CD4-positive, alpha-beta memory T cell (primary cell): ENCODE measurements at regions of chr13 and their contacts with region 1.

Region 1: GRCh38 chr13:32031025-32031814 is at the start of gene FRY:
- DNase-seq: peak; percentile 36 to 67 (median 50)
- H3K4me3 ChIP-seq: peak within 1 kb of the TSS; percentile 31 to 57
- H3K4me3 Mint-ChIP-seq: peak within 1 kb of the TSS; percentile 88 to 94 (median 90)
- H3K27ac ChIP-seq: peak within 1 kb of the TSS; percentile 57
- H3K27ac Mint-ChIP-seq: peak within 1 kb of the TSS; percentile 27 to 89 (median 85)
- H3K4me1 ChIP-seq: peaks cover 27% of the 10 kb centered on the region
- H3K4me1 Mint-ChIP-seq: peaks cover 10 to 47% (median 36%) of the 10 kb centered on the region in 4 donors
- H3K27me3 ChIP-seq: no peaks in the 10 kb centered on the region
- H3K27me3 Mint-ChIP-seq: peaks cover 0 to 2% of the 10 kb centered on the region in 2 donors
- total RNA-seq, gene FRY: 15.8 to 19.2 TPM

Region 2: DNA sequence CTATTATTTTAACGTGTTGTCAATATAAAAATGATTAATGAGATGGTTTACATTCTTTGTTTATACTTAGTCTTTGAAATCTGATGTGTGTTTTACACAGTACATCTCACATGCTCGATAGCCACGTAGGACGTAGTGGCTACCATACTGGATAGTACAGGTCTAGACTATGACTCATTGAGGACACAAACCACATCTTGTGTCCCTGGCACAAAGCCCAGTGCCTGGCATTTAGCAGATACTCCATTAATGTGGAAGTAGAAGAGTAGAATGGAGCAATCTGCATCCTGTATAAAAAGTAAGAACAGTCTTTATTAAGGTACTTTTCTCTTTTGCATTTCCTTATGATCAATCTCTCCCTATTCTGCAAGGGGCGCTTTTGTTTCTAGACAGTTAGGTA is 48.7 kb before region 1 on chr13:
- CTCF ChIA-PET with region 1: no interaction called
- POLR2A ChIA-PET with region 1: no interaction called
- intact Hi-C with region 1: no loop called
- DNase-seq: no peak
- H3K4me3 ChIP-seq: no peak overlapping the region
- H3K4me3 Mint-ChIP-seq: no peak overlapping the region
- H3K27ac ChIP-seq: no peak overlapping the region
- H3K27ac Mint-ChIP-seq: no peak overlapping the region
- H3K4me1 ChIP-seq: no peaks in the 10 kb centered on the region
- H3K4me1 Mint-ChIP-seq: peaks cover 0 to 5% (median 0%) of the 10 kb centered on the region in 4 donors
- H3K27me3 ChIP-seq: no peaks in the 10 kb centered on the region
- H3K27me3 Mint-ChIP-seq: peaks cover 0 to 2% of the 10 kb centered on the region in 2 donors

Region 3: DNA sequence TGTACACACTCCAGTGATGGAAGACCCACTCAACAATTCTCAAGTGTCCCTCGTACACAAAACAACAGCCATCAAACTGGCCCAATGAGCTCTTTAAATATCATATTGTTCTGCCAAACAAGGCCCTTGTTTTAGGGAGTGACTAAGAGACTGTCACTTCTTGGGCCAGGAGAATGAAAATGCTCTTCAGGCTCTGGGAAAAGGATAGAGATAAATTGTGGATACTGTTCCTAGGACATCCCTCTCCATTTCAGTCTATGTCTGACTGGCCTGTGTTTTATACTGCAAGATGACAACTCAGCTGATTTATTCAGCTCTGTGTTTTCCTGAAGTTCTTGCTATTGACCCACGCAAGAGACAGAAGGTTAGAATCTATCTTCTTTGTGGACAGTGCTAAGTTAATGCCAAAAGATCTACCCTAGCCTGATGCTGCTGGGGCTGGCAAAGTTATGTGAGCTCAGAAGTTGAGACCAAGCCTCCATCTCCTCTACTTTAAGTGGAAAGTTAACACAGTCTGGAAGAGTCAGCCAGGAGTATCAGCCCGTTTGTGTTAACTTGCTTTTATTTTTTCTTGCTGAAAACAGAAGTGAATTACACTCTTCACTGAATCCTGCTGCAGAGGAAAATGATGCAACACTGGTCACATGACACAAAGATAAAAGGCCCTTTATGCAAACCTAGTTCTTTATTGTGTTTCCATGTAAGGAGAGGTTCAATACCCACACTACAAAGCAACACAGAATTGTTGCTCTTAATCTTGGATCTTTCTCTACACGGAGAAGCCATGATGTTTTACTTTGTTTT is 15.0 kb after region 1 on chr13:
- CTCF ChIA-PET with region 1: interaction called, 4 read pairs
- POLR2A ChIA-PET with region 1: interaction called, 12 read pairs
- intact Hi-C with region 1: loop called (anchors 2 kb)
- DNase-seq: peak in 2 of 5 donors; percentile 11 to 16
- H3K4me3 ChIP-seq: no peak overlapping the region
- H3K4me3 Mint-ChIP-seq: peak overlapping the region in 6 of 8 donors; percentile 29 to 66 (median 44)
- H3K27ac ChIP-seq: no peak overlapping the region
- H3K27ac Mint-ChIP-seq: peak overlapping the region in 3 of 7 donors; percentile 19 to 83 (median 60)
- H3K4me1 ChIP-seq: peaks cover 38% of the 10 kb centered on the region
- H3K4me1 Mint-ChIP-seq: peaks cover 25 to 61% (median 41%) of the 10 kb centered on the region in 4 donors
- H3K27me3 ChIP-seq: no peaks in the 10 kb centered on the region
- H3K27me3 Mint-ChIP-seq: no peaks in the 10 kb centered on the region

Region 4: GRCh38 chr13:32142956-32143375 is 111.7 kb after region 1 on chr13:
- CTCF ChIA-PET with region 1: no interaction called
- POLR2A ChIA-PET with region 1: no interaction called
- intact Hi-C with region 1: loop called (anchors 10 kb)
- DNase-seq: no peak
- H3K4me3 ChIP-seq: no peak overlapping the region
- H3K4me3 Mint-ChIP-seq: no peak overlapping the region
- H3K27ac ChIP-seq: no peak overlapping the region
- H3K27ac Mint-ChIP-seq: no peak overlapping the region
- H3K4me1 ChIP-seq: no peaks in the 10 kb centered on the region
- H3K4me1 Mint-ChIP-seq: no peaks in the 10 kb centered on the region
- H3K27me3 ChIP-seq: peaks cover 3% of the 10 kb centered on the region
- H3K27me3 Mint-ChIP-seq: peaks cover 0 to 4% of the 10 kb centered on the region in 2 donors